CD4-positive, alpha-beta T cell (primary cell): ENCODE measurements at regions of chr6 and their contacts with region 1.

Region 1: GRCh38 chr6:107731422-107732319 is 92.4 kb downstream of the SCML4 start:
- DNase-seq: peak in 12 of 14 experiments; percentile 25 to 68 (median 50)
- ATAC-seq: peak; percentile 58
- H3K4me3 ChIP-seq: peak overlapping the region; percentile 84
- H3K4me3 Mint-ChIP-seq: peak overlapping the region; percentile 94
- H3K27ac ChIP-seq: peak overlapping the region; percentile 59 to 79
- H3K27ac Mint-ChIP-seq: peak overlapping the region; percentile 93
- H3K4me1 ChIP-seq: peaks cover 81% of the 10 kb centered on the region
- H3K4me1 Mint-ChIP-seq: peaks cover 94% of the 10 kb centered on the region
- H3K27me3 ChIP-seq: no peaks in the 10 kb centered on the region
- H3K27me3 Mint-ChIP-seq: no peaks in the 10 kb centered on the region
- CTCF ChIP-seq: no peak

Region 2: GRCh38 chr6:106372838-106373501 is 1358.7 kb before region 1 on chr6:
- CTCF ChIA-PET with region 1: no interaction called
- POLR2A ChIA-PET with region 1: no interaction called
- intact Hi-C with region 1: no loop called
- DNase-seq: no peak
- ATAC-seq: no peak
- H3K4me3 ChIP-seq: no peak overlapping the region
- H3K4me3 Mint-ChIP-seq: no peak overlapping the region
- H3K27ac ChIP-seq: no peak overlapping the region
- H3K27ac Mint-ChIP-seq: no peak overlapping the region
- H3K4me1 ChIP-seq: no peaks in the 10 kb centered on the region
- H3K4me1 Mint-ChIP-seq: no peaks in the 10 kb centered on the region
- H3K27me3 ChIP-seq: no peaks in the 10 kb centered on the region
- H3K27me3 Mint-ChIP-seq: peaks cover under 1% of the 10 kb centered on the region
- CTCF ChIP-seq: no peak

Region 3: GRCh38 chr6:107246972-107247615 is 484.6 kb before region 1 on chr6:
- CTCF ChIA-PET with region 1: no interaction called
- POLR2A ChIA-PET with region 1: no interaction called
- intact Hi-C with region 1: no loop called
- DNase-seq: no peak
- ATAC-seq: no peak
- H3K4me3 ChIP-seq: no peak overlapping the region
- H3K4me3 Mint-ChIP-seq: no peak overlapping the region
- H3K27ac ChIP-seq: no peak overlapping the region
- H3K27ac Mint-ChIP-seq: no peak overlapping the region
- H3K4me1 ChIP-seq: no peaks in the 10 kb centered on the region
- H3K4me1 Mint-ChIP-seq: no peaks in the 10 kb centered on the region
- H3K27me3 ChIP-seq: no peaks in the 10 kb centered on the region
- H3K27me3 Mint-ChIP-seq: no peaks in the 10 kb centered on the region
- CTCF ChIP-seq: no peak

Region 4: DNA sequence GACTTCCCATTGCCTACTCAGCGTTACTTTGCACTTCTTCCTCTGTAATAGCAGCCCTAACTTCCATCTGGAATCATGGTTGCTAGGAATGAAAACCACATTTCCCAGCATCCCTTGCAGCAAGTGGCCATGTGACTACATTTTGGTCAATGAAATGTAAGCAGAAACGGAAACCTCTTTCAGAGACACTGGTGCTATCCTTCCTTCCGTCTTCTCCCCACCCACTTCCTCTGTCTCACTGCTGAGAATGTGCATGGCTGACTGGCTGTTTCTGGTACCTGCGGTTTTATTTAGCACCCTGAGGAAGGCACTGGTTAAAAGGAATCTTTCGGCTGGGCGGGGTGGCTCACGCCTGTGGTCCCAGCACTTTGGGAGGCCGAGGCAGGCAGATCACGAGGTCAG is 15.0 kb before region 1 on chr6:
- CTCF ChIA-PET with region 1: interaction called, 8 read pairs
- POLR2A ChIA-PET with region 1: interaction called, 8 read pairs
- intact Hi-C with region 1: loop called in 1 of 2 experiments (anchors 2 kb)
- DNase-seq: peak; percentile 49 to 95 (median 66)
- ATAC-seq: peak; percentile 91
- H3K4me3 ChIP-seq: no peak overlapping the region
- H3K4me3 Mint-ChIP-seq: peak overlapping the region; percentile 75
- H3K27ac ChIP-seq: peak overlapping the region in 1 of 2 donors; percentile 63
- H3K27ac Mint-ChIP-seq: peak overlapping the region; percentile 91
- H3K4me1 ChIP-seq: peaks cover 76% of the 10 kb centered on the region
- H3K4me1 Mint-ChIP-seq: peaks cover 77% of the 10 kb centered on the region
- H3K27me3 ChIP-seq: no peaks in the 10 kb centered on the region
- H3K27me3 Mint-ChIP-seq: no peaks in the 10 kb centered on the region
- CTCF ChIP-seq: no peak

Region 5: DNA sequence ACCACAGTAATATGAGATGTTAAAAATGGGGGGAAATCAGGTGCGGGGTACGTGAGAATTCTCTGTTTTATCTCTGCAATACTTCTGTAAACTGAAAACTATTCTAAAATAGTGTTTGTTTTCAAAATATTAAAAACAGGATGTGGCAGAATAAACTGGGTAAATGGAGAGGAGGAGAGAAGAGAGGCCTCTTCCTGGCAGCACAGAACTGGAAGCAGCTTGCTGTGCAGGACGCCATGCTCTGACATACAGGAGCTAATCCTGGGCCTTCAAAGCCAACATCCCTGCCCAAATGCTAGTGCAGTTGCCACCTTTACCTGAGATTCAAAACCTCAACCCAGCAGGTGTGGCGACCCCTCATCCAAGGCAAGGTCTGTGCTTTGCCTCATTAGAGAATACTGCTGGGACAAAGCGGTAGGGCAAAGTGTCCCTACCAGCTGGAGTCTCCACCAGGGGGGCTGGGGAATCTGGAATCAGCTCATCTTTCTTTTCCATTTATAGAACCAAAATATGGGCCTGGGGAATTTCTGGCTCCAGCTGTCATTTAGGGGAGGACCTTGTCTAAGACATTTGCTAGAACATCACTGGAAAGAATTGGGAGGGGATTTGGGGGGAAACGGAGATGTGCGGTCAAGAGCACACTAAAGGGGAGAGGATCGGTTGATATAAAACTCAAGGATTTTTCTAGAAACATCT is 25.1 kb after region 1 on chr6:
- CTCF ChIA-PET with region 1: interaction called, 3 read pairs
- POLR2A ChIA-PET with region 1: interaction called, 10 read pairs
- intact Hi-C with region 1: loop called in 1 of 2 experiments (anchors 2 kb)
- DNase-seq: peak in 2 of 14 experiments; percentile 26 to 54
- ATAC-seq: peak; percentile 43
- H3K4me3 ChIP-seq: no peak overlapping the region
- H3K4me3 Mint-ChIP-seq: peak overlapping the region; percentile 31
- H3K27ac ChIP-seq: peak overlapping the region in 1 of 2 donors; percentile 55
- H3K27ac Mint-ChIP-seq: peak overlapping the region; percentile 69
- H3K4me1 ChIP-seq: peaks cover 30% of the 10 kb centered on the region
- H3K4me1 Mint-ChIP-seq: peaks cover 79% of the 10 kb centered on the region
- H3K27me3 ChIP-seq: no peaks in the 10 kb centered on the region
- H3K27me3 Mint-ChIP-seq: no peaks in the 10 kb centered on the region
- CTCF ChIP-seq: no peak

Region 6: GRCh38 chr6:107786709-107787588 is 55.3 kb after region 1 on chr6:
- CTCF ChIA-PET with region 1: interaction called, 6 read pairs
- POLR2A ChIA-PET with region 1: interaction called, 82 read pairs
- intact Hi-C with region 1: loop called (anchors 2 to 5 kb)
- DNase-seq: peak in 13 of 14 experiments; percentile 30 to 75 (median 52)
- ATAC-seq: peak; percentile 79
- H3K4me3 ChIP-seq: peak overlapping the region; percentile 0
- H3K4me3 Mint-ChIP-seq: peak overlapping the region; percentile 87
- H3K27ac ChIP-seq: peak overlapping the region; percentile 19 to 66
- H3K27ac Mint-ChIP-seq: peak overlapping the region; percentile 93
- H3K4me1 ChIP-seq: peaks cover 81% of the 10 kb centered on the region
- H3K4me1 Mint-ChIP-seq: peaks cover 87% of the 10 kb centered on the region
- H3K27me3 ChIP-seq: no peaks in the 10 kb centered on the region
- H3K27me3 Mint-ChIP-seq: no peaks in the 10 kb centered on the region
- CTCF ChIP-seq: no peak

Region 7: GRCh38 chr6:107793191-107793590 is 61.5 kb after region 1 on chr6:
- CTCF ChIA-PET with region 1: interaction called, 3 read pairs
- POLR2A ChIA-PET with region 1: interaction called, 25 read pairs
- intact Hi-C with region 1: loop called in 1 of 2 experiments (anchors 5 kb)
- DNase-seq: peak in 2 of 14 experiments; percentile 23 to 24
- ATAC-seq: peak; percentile 73
- H3K4me3 ChIP-seq: no peak overlapping the region
- H3K4me3 Mint-ChIP-seq: peak overlapping the region; percentile 13
- H3K27ac ChIP-seq: peak overlapping the region; percentile 43 to 61
- H3K27ac Mint-ChIP-seq: peak overlapping the region; percentile 93
- H3K4me1 ChIP-seq: peaks cover 42% of the 10 kb centered on the region
- H3K4me1 Mint-ChIP-seq: peaks cover 90% of the 10 kb centered on the region
- H3K27me3 ChIP-seq: no peaks in the 10 kb centered on the region
- H3K27me3 Mint-ChIP-seq: no peaks in the 10 kb centered on the region
- CTCF ChIP-seq: no peak

Region 8: GRCh38 chr6:107866606-107867301 is 135.1 kb after region 1 on chr6:
- CTCF ChIA-PET with region 1: interaction called, 17 read pairs
- POLR2A ChIA-PET with region 1: interaction called, 14 read pairs
- intact Hi-C with region 1: loop called (anchors 1 kb)
- DNase-seq: peak in 6 of 14 experiments; percentile 17 to 76 (median 60)
- ATAC-seq: peak; percentile 78
- H3K4me3 ChIP-seq: no peak overlapping the region
- H3K4me3 Mint-ChIP-seq: no peak overlapping the region
- H3K27ac ChIP-seq: no peak overlapping the region
- H3K27ac Mint-ChIP-seq: peak overlapping the region; percentile 13
- H3K4me1 ChIP-seq: peaks cover 3% of the 10 kb centered on the region
- H3K4me1 Mint-ChIP-seq: peaks cover 7% of the 10 kb centered on the region
- H3K27me3 ChIP-seq: no peaks in the 10 kb centered on the region
- H3K27me3 Mint-ChIP-seq: peaks cover 4% of the 10 kb centered on the region
- CTCF ChIP-seq: peak; percentile 79